Heart right ventricle (tissue), 16 donors: ENCODE measurements at regions of chr17 and their contacts with region 1.

Region 1: DNA sequence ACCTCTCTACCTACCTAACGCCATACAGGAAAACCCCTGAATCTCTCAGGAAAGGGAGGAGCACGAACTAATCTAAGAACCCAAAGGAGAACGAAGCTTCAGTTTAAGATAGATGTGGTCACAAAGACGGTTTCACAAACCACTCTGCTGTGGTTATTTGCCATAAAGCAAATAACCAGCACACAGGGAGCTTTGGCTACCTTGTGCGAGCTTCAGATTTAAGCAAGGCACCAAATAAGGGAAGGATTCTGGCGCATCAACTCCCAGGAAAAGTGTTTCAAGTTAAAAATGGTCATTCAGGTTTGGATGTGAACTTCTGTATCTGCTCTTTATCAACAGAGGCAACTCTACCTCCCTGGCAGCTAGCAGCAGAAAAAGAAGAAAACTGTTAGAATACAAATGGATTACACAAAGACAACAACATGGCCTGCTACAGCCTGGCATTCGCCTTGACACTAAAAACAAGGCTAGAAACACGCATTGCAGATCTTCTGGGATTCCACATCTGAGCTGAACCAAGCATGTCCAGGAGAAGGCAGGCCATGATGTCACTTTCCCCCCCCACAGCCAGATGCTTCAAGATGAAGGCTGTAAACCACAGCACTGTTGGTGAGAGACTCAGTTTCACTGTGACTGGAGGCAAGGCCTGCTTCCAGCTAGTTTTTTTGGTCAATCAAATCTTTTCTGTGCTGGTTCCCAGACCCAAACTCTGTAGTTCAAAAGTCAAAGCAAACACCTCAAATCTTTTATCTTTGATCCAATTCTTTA is 43.6 kb downstream of the SMG6 start:
- DNase-seq: no peak
- ATAC-seq: no peak
- H3K4me3 ChIP-seq: no peak overlapping the region
- H3K27ac ChIP-seq: peak overlapping the region in 1 of 10 donors; percentile 70
- H3K4me1 ChIP-seq: peaks cover 0 to 45% (median 14%) of the 10 kb centered on the region in 9 donors
- H3K27me3 ChIP-seq: no peaks in the 10 kb centered on the region
- CTCF ChIP-seq: no peak

Region 2: GRCh38 chr17:1170739-1171138 is 1089.2 kb before region 1 on chr17:
- intact Hi-C with region 1: loop called in 1 of 10 experiments (anchors 5 kb)
- DNase-seq: no peak
- ATAC-seq: no peak
- H3K4me3 ChIP-seq: no peak overlapping the region
- H3K27ac ChIP-seq: no peak overlapping the region
- H3K4me1 ChIP-seq: peaks cover 11 to 87% (median 42%) of the 10 kb centered on the region in 9 donors
- H3K27me3 ChIP-seq: no peaks in the 10 kb centered on the region
- CTCF ChIP-seq: peak in 2 of 9 donors; percentile 7 to 13

Region 3: GRCh38 chr17:2102931-2103809 is 156.8 kb before region 1 on chr17:
- intact Hi-C with region 1: no loop called
- DNase-seq: no peak
- ATAC-seq: no peak
- H3K4me3 ChIP-seq: no peak overlapping the region
- H3K27ac ChIP-seq: peak overlapping the region in 1 of 10 donors; percentile 16
- H3K4me1 ChIP-seq: peaks cover 17 to 57% (median 36%) of the 10 kb centered on the region in 9 donors
- H3K27me3 ChIP-seq: no peaks in the 10 kb centered on the region
- CTCF ChIP-seq: no peak